ENCODE measurements at regions of chr11 and their contacts with region 1.

Region 1: DNA sequence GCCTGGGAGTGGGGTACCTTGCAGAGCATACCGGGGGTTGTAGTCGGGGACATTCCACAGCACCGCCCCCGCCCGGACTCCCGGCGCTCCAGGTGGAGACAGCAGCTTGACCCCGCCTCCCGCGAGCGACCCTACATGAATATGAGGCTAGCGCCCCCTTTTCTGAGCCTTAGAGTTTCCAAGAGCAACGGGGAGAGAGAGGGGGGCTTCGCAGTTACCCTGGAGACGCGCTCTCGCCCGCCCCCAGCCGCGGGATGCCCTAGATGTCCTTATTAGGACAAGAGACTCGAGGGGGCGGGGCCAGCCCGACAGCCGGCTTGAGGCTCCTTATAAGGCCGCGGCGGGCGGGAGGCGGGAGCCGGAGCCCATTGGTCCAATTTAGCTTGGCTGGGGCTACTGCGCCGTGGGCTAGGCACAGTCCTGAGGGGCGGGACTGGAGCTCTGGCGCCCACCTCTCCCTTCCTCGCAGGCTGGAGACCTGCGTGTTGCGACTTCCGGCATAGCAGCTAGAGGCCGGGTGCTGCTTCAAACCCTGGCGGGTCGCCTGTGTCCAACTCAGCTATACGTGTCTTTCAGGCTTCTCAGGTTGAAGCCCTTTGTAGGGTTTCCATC is 927 bp upstream of the MUS81 start:
- DNase-seq: peak; percentile 94 to 99 (median 97)
- H3K4me3 ChIP-seq: peak overlapping the region; percentile 94
- H3K4me3 Mint-ChIP-seq: peak overlapping the region; percentile 90 to 96 (median 93)
- H3K27ac ChIP-seq: peak overlapping the region; percentile 93
- H3K27ac Mint-ChIP-seq: peak overlapping the region; percentile 88 to 98 (median 98)
- H3K4me1 ChIP-seq: peaks cover 52% of the 10 kb centered on the region
- H3K4me1 Mint-ChIP-seq: peaks cover 46 to 62% (median 55%) of the 10 kb centered on the region in 3 donors
- H3K27me3 ChIP-seq: no peaks in the 10 kb centered on the region
- H3K27me3 Mint-ChIP-seq: no peaks in the 10 kb centered on the region

Region 2: GRCh38 chr11:65625628-65626342 is 233.5 kb before region 1 on chr11:
- CTCF ChIA-PET with region 1: no interaction called
- POLR2A ChIA-PET with region 1: no interaction called
- DNase-seq: peak; percentile 48 to 73 (median 57)
- H3K4me3 ChIP-seq: no peak overlapping the region
- H3K4me3 Mint-ChIP-seq: no peak overlapping the region
- H3K27ac ChIP-seq: no peak overlapping the region
- H3K27ac Mint-ChIP-seq: peak overlapping the region; percentile 10 to 84 (median 71)
- H3K4me1 ChIP-seq: peaks cover 7% of the 10 kb centered on the region
- H3K4me1 Mint-ChIP-seq: peaks cover 4 to 14% (median 6%) of the 10 kb centered on the region in 3 donors
- H3K27me3 ChIP-seq: no peaks in the 10 kb centered on the region
- H3K27me3 Mint-ChIP-seq: no peaks in the 10 kb centered on the region

Region 3: GRCh38 chr11:65833297-65834030 is 25.8 kb before region 1 on chr11 and contains the start of gene SNX32:
- CTCF ChIA-PET with region 1: interaction called, 17 read pairs
- POLR2A ChIA-PET with region 1: interaction called, 7 read pairs
- DNase-seq: peak; percentile 90 to 94 (median 91)
- H3K4me3 ChIP-seq: peak within 1 kb of the TSS; percentile 57
- H3K4me3 Mint-ChIP-seq: no peak within 1 kb of the TSS
- H3K27ac ChIP-seq: no peak within 1 kb of the TSS
- H3K27ac Mint-ChIP-seq: peak within 1 kb of the TSS in 6 of 8 donors; percentile 15 to 79 (median 67)
- H3K4me1 ChIP-seq: peaks cover 16% of the 10 kb centered on the region
- H3K4me1 Mint-ChIP-seq: peaks cover 8 to 14% (median 13%) of the 10 kb centered on the region in 3 donors
- H3K27me3 ChIP-seq: no peaks in the 10 kb centered on the region
- H3K27me3 Mint-ChIP-seq: peaks cover 0 to 2% of the 10 kb centered on the region in 2 donors
- total RNA-seq, gene SNX32: 2.0 to 2.8 TPM

Region 4: DNA sequence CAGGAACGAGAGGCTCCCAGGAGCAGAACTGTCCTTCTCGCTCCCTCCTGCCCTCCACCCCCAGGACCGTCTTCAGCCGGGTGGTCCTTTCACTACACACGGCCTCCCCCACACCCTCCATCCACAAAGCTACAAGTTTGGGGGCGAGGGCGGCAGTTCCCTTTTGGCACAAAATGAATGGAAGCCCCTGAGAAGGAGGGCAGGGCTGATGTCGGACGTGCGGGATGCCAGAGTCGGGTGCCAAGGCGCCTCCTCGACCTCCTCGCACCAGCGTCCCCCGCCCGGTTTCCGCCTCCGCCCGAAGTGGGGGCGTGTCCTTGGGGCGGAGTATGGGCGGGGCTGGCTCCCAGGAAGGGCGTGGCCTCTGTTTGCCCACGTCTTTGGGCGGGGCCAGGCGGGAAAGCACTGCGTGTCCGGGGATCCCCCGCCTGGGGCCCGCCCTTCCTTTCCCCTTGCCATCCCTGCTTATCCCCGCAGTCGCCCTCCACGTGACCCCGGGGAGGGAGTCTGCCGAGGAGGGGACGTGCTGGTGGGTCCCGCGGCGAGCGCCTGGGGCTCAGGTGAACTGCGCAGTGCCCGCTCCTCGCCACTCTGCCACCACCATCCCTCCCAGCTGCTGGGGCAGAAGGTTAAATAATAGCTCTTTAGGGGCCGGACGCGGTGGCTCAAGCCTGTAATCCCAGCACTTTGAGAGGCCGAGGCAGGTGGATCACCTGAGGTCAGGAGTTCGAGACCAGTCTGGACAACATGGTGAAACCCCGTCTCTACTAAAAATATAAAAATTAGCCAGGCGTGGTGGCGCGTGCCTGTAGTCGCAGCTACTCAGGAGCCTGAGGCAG is 14.2 kb after region 1 on chr11:
- CTCF ChIA-PET with region 1: interaction called, 560 read pairs
- POLR2A ChIA-PET with region 1: interaction called, 39 read pairs
- DNase-seq: peak; percentile 94 to 98 (median 96)
- H3K4me3 ChIP-seq: peak overlapping the region; percentile 82
- H3K4me3 Mint-ChIP-seq: peak overlapping the region; percentile 81 to 93 (median 88)
- H3K27ac ChIP-seq: peak overlapping the region; percentile 76
- H3K27ac Mint-ChIP-seq: peak overlapping the region; percentile 80 to 99 (median 92)
- H3K4me1 ChIP-seq: peaks cover 28% of the 10 kb centered on the region
- H3K4me1 Mint-ChIP-seq: peaks cover 23 to 49% (median 32%) of the 10 kb centered on the region in 3 donors
- H3K27me3 ChIP-seq: no peaks in the 10 kb centered on the region
- H3K27me3 Mint-ChIP-seq: peaks cover 0 to 3% of the 10 kb centered on the region in 2 donors

Region 5: DNA sequence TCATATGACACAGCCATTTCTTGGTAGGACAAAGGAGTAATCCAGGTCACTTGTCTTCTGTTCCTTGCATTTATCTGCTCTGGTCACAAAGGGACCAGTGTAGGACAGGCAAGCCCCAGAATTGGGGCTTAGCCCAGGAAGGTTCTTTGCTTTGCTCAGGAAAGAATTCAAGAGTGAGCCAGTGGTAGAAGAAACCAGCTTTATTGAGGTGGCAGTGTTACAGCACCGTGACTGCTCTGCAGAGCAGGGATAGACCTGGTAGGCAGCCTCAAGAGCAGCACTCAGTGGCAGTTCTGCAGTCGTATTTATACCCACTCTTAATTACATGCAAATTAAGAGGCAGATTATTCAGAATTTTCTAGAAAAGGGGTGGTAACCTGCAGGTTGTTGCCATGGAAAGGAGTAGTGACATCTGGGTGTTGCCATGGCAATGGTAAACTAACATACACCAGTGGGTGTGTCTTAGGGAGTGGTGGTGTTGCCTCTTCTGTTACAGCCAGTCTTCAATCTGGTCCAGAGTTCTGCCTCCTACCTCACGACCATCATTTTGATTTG is 324.3 kb after region 1 on chr11:
- CTCF ChIA-PET with region 1: no interaction called
- POLR2A ChIA-PET with region 1: no interaction called
- DNase-seq: peak in 2 of 5 donors; percentile 37 to 39
- H3K4me3 ChIP-seq: no peak overlapping the region
- H3K4me3 Mint-ChIP-seq: no peak overlapping the region
- H3K27ac ChIP-seq: no peak overlapping the region
- H3K27ac Mint-ChIP-seq: peak overlapping the region in 5 of 8 donors; percentile 29 to 78 (median 62)
- H3K4me1 ChIP-seq: peaks cover 13% of the 10 kb centered on the region
- H3K4me1 Mint-ChIP-seq: peaks cover 53 to 82% (median 70%) of the 10 kb centered on the region in 3 donors
- H3K27me3 ChIP-seq: no peaks in the 10 kb centered on the region
- H3K27me3 Mint-ChIP-seq: no peaks in the 10 kb centered on the region